GM12878 (cell line): ENCODE measurements at regions of chr10 and their contacts with region 1.

Region 1: GRCh38 chr10:92757066-92757710 is 67.4 kb downstream of the HHEX start:
- DNase-seq: peak; percentile 75
- ATAC-seq: peak; percentile 84
- H3K4me3 ChIP-seq: peak overlapping the region; percentile 35; the same call in 1 of the 2 replicates
- H3K27ac ChIP-seq: peak overlapping the region; percentile 77
- H3K4me1 ChIP-seq: peaks cover 34% of the 10 kb centered on the region
- H3K27me3 ChIP-seq: peaks cover 0 to 2% of the 10 kb centered on the region in 2 experiments; a peak in 1 of 4 replicates
- CTCF ChIP-seq: peak; percentile 23 to 46 (median 29); a peak in 4 of 6 replicates
- EP300 ChIP-seq: no peak
- POLR2A ChIP-seq: no peak
- RAD21 ChIP-seq: peak; percentile 38; the same call in 1 of the 2 replicates

Region 2: DNA sequence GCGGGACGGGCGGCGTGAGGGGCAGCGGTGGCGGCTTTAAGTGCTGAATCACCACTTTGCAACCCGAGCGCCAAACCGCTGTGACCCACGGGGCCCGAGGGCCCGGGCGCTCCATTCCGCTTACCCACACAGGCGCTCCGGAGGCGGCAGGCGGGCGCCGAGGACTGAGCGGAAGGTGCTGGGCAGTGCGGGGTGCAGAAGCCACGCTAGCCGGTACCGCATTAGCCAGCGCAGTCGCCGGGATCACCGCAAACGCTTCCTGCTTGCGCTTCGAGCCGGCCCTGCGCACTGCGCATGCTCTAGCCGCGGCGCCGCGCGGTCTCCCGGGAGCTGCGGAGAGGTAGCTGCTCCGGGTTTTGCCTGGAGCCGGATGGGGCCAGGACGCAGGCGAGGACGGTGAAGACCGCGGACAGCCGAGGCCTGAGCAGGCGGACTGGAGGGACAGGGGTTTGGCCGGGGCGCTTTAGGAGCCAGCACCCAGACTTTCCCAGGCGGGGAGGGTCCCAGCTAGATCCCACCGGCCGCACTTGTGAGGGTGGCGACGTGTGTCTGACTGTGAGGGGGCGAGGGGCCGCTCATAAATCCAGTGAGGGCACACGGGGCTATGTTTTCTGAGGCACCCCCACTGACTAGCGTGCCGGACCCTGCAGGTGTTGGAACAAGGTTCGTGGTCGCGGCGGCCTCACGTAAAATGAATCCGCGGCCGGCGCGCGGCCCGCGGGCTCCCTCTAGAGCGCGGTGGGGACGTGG is 183.2 kb before region 1 on chr10 and contains the start of gene IDE:
- CTCF ChIA-PET with region 1: no interaction called
- POLR2A ChIA-PET with region 1: no interaction called
- RAD21 ChIA-PET with region 1: no interaction called
- SMC1A ChIA-PET with region 1: no interaction called
- in situ Hi-C with region 1: no loop called
- intact Hi-C with region 1: no loop called
- DNase-seq: peak; percentile 45
- ATAC-seq: peak; percentile 82
- H3K4me3 ChIP-seq: peak within 1 kb of the TSS; percentile 82
- H3K27ac ChIP-seq: peak within 1 kb of the TSS; percentile 92
- H3K4me1 ChIP-seq: peaks cover 4% of the 10 kb centered on the region
- H3K27me3 ChIP-seq: no peaks in the 10 kb centered on the region
- CTCF ChIP-seq: peak; percentile 94 to 96 (median 94)
- EP300 ChIP-seq: no peak
- POLR2A ChIP-seq: peak; percentile 93
- RAD21 ChIP-seq: peak; percentile 88
- polyA plus RNA-seq, gene IDE: 11.6 to 13.1 TPM

Region 3: DNA sequence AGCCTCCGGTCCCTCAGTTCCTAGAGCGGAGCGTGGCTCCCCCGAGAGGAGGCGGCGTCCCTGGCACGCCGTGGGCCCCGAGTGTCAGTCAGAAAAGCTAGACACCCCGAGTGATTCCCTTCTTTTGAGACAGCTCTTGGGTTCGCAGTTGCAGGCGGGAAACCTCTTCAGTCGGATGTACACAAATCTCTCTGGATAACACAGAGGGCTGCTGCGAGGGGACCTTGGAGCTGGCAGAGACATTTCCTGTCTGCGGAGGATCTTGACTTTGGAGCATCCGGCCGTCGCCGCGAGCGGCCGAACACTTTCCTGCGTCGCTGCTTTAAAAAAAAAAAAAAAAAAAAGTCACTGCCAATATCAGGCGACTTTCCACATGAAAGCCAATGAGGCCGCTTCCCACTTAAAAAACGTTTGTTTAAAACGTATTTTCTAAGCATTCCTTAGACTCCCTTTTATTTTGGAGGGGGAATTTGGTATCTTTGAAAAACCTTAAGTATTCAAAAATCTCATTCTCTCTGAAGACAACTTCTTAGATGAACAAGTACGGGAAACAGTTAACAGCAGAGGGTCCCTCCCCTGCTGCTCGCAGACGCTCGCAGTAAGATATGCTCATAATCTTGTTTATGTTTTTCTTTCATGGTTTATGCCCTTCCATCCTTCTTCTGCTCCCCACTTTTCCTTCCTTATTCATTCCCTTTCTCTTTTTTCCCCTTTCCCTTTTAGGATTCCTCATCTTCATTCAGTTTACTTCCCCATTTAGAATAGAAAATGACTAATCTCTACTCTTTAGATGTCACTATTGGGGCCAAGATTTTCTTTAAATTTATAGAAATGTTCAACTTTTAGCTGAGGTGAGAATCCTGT is 57.4 kb before region 1 on chr10:
- CTCF ChIA-PET with region 1: no interaction called
- POLR2A ChIA-PET with region 1: no interaction called
- RAD21 ChIA-PET with region 1: no interaction called
- SMC1A ChIA-PET with region 1: interaction called, 4 read pairs
- in situ Hi-C with region 1: no loop called
- intact Hi-C with region 1: loop called (anchors 2 kb)
- DNase-seq: no peak
- ATAC-seq: peak; percentile 64
- H3K4me3 ChIP-seq: no peak overlapping the region; the same call in 1 of the 2 replicates
- H3K27ac ChIP-seq: no peak overlapping the region
- H3K4me1 ChIP-seq: peaks cover 16% of the 10 kb centered on the region
- H3K27me3 ChIP-seq: peaks cover 2 to 9% of the 10 kb centered on the region in 2 experiments; a peak in 1 of 4 replicates
- CTCF ChIP-seq: no peak
- EP300 ChIP-seq: no peak
- POLR2A ChIP-seq: no peak
- RAD21 ChIP-seq: no peak

Region 4: DNA sequence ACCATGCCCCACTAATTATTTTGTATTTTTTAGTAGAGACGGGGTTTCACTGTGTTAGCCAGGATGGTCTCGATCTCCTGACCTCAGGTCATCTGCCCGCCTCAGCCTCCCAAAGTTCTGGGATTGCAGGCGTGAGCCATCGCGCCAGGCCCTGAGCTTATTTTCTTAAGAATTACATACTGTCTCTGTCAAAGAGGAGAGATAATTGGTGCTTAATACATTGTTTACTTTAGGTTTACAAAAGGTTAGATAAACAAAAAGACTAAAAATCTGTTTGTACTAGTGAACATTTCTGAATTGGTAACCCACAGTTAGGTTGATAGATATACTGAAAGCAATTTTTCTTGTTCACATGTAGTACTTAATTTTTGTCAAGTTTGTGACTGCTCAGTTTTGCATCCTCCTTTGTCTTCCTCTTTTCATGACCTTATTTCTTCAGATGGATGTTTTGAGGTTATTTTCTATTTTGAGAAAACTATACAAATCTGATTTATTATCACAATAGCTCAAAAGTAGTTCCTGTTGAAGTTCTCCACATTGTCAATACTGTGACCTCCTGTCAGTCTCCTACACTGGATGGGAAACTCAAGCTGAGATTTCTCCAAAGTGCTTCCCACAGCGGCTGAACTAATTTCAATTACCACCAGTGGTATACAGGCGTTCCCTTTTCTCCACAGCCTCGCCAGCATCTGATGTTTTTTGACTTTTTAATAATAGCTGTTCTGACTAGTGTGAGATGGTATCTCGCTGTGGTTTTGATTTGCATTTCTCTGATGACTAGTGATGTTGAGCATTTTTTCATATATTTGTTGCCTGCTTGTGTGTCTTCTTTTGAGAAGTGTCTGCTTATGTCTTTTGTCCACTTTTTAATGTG is 44.9 kb before region 1 on chr10:
- CTCF ChIA-PET with region 1: no interaction called
- POLR2A ChIA-PET with region 1: no interaction called
- RAD21 ChIA-PET with region 1: no interaction called
- SMC1A ChIA-PET with region 1: interaction called, 3 read pairs
- in situ Hi-C with region 1: no loop called
- intact Hi-C with region 1: loop called (anchors 1 kb)
- DNase-seq: peak; percentile 16
- ATAC-seq: peak; percentile 75
- H3K4me3 ChIP-seq: no peak overlapping the region
- H3K27ac ChIP-seq: no peak overlapping the region
- H3K4me1 ChIP-seq: peaks cover 9% of the 10 kb centered on the region; the same call in 1 of the 2 replicates
- H3K27me3 ChIP-seq: no peaks in the 10 kb centered on the region
- CTCF ChIP-seq: no peak
- EP300 ChIP-seq: no peak
- POLR2A ChIP-seq: no peak
- RAD21 ChIP-seq: no peak

Region 5: GRCh38 chr10:92729886-92730285 is 27.3 kb before region 1 on chr10:
- CTCF ChIA-PET with region 1: interaction called, 3 read pairs
- POLR2A ChIA-PET with region 1: interaction called, 5 read pairs
- RAD21 ChIA-PET with region 1: interaction called, 4 read pairs
- SMC1A ChIA-PET with region 1: interaction called, 4 read pairs
- in situ Hi-C with region 1: no loop called
- intact Hi-C with region 1: loop called (anchors 1 kb)
- DNase-seq: peak; percentile 35
- ATAC-seq: peak; percentile 95
- H3K4me3 ChIP-seq: 0 out of 2 replicates have a peak overlapping the region, but pooled peaks have one; percentile 10
- H3K27ac ChIP-seq: no peak overlapping the region
- H3K4me1 ChIP-seq: peaks cover 16% of the 10 kb centered on the region
- H3K27me3 ChIP-seq: peaks cover 0 to 5% of the 10 kb centered on the region in 2 experiments; a peak in 2 of 4 replicates
- CTCF ChIP-seq: no peak
- EP300 ChIP-seq: peak in 1 of 2 experiments; percentile 6; a peak in 1 of 4 replicates
- POLR2A ChIP-seq: no peak
- RAD21 ChIP-seq: peak; percentile 19; the same call in 1 of the 2 replicates

Region 6: DNA sequence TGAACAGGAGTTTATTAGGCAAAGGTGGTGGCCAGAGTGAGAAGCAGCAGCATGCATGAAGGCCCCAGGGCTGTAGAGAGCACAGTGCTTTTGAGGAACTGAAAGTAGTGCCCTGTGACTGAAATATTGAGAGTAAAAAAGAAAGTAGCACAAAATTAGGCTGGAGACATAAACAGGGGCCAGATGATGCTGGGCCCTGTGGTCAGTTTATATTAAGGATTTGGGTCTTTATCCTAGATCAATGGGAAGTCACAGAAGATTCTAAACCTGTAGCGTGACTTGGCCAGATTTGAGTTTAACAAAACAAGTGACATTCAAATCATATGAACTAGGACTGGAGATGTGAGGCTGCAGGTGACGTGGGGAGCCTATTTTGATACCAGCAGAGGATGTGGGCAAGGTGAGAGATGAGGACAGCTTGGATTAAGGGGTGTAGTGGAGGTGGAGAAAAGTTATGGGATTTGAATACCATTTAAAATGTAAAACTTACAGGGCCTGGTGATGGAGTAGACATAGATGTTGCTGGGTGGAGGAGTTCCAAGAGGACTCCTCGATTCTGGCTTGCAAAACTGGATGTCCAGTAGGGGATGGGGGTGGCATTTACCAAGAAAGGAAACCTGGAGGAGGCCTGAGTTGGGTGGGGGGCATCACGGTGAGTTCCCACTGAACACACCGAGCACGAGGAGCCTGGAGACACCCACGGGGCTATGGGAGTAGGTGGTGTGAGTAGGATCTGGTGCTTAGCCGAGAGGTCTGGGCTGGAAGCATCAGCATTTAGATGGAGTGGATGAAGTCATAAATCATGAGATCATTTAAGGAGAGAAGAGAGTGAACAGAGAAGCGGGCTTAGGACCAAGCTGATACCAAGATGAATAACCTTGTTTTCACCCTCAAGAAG is 14.6 kb before region 1 on chr10:
- CTCF ChIA-PET with region 1: interaction called, 22 read pairs
- POLR2A ChIA-PET with region 1: interaction called, 8 read pairs
- RAD21 ChIA-PET with region 1: interaction called, 25 read pairs
- SMC1A ChIA-PET with region 1: interaction called, 36 read pairs
- in situ Hi-C with region 1: no loop called
- intact Hi-C with region 1: loop called (anchors 1 kb)
- DNase-seq: peak; percentile 81
- ATAC-seq: peak; percentile 98
- H3K4me3 ChIP-seq: no peak overlapping the region
- H3K27ac ChIP-seq: peak overlapping the region; percentile 62
- H3K4me1 ChIP-seq: peaks cover 35% of the 10 kb centered on the region
- H3K27me3 ChIP-seq: no peaks in the 10 kb centered on the region; a peak in 1 of 4 replicates
- CTCF ChIP-seq: no peak
- EP300 ChIP-seq: peak; percentile 92 to 99
- POLR2A ChIP-seq: no peak
- RAD21 ChIP-seq: no peak

Region 7: DNA sequence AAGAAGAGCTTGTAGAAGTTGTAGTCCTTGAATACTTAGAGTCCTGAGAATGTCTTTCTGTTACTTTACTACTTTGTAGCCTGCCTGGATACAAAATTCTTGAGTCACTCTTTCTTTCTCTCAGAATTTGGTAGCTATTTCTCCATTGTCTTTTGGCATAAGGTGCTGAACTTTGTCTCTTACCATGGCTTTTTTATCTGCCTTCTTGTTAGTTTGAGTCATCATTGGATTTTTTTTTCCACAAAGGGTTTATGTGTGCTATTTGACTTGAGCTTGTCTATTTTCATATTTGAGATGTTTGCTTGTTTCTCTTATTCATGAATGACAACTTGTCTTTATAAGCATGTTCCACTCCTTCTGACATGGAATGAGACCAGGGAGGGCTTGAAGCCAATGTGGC is 16.6 kb after region 1 on chr10:
- CTCF ChIA-PET with region 1: no interaction called
- POLR2A ChIA-PET with region 1: no interaction called
- RAD21 ChIA-PET with region 1: no interaction called
- SMC1A ChIA-PET with region 1: no interaction called
- in situ Hi-C with region 1: no loop called
- intact Hi-C with region 1: no loop called
- DNase-seq: no peak
- ATAC-seq: no peak
- H3K4me3 ChIP-seq: no peak overlapping the region
- H3K27ac ChIP-seq: no peak overlapping the region
- H3K4me1 ChIP-seq: no peaks in the 10 kb centered on the region
- H3K27me3 ChIP-seq: peaks cover 0 to 7% of the 10 kb centered on the region in 2 experiments; a peak in 1 of 4 replicates
- CTCF ChIP-seq: no peak
- EP300 ChIP-seq: no peak
- POLR2A ChIP-seq: no peak
- RAD21 ChIP-seq: no peak

Region 8: DNA sequence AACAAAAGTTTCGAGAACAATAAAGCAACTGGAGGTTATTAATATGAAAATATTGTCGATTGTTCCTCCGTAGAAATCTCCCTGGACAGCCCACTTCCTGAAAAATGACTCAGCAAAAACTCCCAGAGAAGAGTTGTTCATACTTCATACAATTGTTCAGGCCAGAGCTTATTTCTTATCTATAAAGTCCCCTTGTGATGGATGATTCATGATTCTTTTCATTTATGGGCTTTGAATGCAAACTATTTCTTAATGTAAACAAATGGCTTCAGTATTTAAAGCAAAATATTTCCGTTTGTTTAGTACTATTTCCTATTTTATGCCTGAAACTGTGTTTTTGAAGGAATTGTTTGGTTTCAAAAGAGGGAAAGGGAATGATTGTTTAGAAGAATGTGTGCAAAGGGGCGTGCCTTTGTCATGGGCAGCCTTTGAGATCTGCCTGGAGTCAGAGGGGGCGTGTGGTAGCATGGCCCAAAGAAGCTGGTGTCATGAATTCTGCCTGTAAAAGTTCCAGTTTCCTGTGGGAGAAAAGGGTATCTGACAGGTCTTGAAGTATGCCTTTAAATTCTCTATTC is 65.0 kb after region 1 on chr10:
- CTCF ChIA-PET with region 1: no interaction called
- POLR2A ChIA-PET with region 1: no interaction called
- RAD21 ChIA-PET with region 1: no interaction called
- SMC1A ChIA-PET with region 1: no interaction called
- in situ Hi-C with region 1: no loop called
- intact Hi-C with region 1: loop called (anchors 2 kb)
- DNase-seq: no peak
- ATAC-seq: peak; percentile 66
- H3K4me3 ChIP-seq: no peak overlapping the region
- H3K27ac ChIP-seq: no peak overlapping the region
- H3K4me1 ChIP-seq: no peaks in the 10 kb centered on the region
- H3K27me3 ChIP-seq: peaks cover 0 to 4% of the 10 kb centered on the region in 2 experiments; a peak in 1 of 4 replicates
- CTCF ChIP-seq: no peak
- EP300 ChIP-seq: no peak
- POLR2A ChIP-seq: no peak
- RAD21 ChIP-seq: no peak

Region 9: GRCh38 chr10:92848441-92849233 is 91.4 kb after region 1 on chr10 and contains the start of gene EXOC6:
- CTCF ChIA-PET with region 1: interaction called, 12 read pairs
- POLR2A ChIA-PET with region 1: no interaction called
- RAD21 ChIA-PET with region 1: interaction called, 3 read pairs
- SMC1A ChIA-PET with region 1: interaction called, 4 read pairs
- in situ Hi-C with region 1: no loop called
- intact Hi-C with region 1: no loop called
- DNase-seq: peak; percentile 20
- ATAC-seq: peak; percentile 90
- H3K4me3 ChIP-seq: peak within 1 kb of the TSS; percentile 93
- H3K27ac ChIP-seq: peak within 1 kb of the TSS; percentile 75
- H3K4me1 ChIP-seq: peaks cover 17% of the 10 kb centered on the region
- H3K27me3 ChIP-seq: no peaks in the 10 kb centered on the region
- CTCF ChIP-seq: peak in 2 of 3 experiments; percentile 12 to 13; a peak in 2 of 6 replicates
- EP300 ChIP-seq: no peak
- POLR2A ChIP-seq: peak; percentile 89
- RAD21 ChIP-seq: no peak
- polyA plus RNA-seq, gene EXOC6: 8.2 to 8.4 TPM